Pancreas (tissue), 10 donors: ENCODE measurements at regions of chr10 and their contacts with region 1.

Region 1: DNA sequence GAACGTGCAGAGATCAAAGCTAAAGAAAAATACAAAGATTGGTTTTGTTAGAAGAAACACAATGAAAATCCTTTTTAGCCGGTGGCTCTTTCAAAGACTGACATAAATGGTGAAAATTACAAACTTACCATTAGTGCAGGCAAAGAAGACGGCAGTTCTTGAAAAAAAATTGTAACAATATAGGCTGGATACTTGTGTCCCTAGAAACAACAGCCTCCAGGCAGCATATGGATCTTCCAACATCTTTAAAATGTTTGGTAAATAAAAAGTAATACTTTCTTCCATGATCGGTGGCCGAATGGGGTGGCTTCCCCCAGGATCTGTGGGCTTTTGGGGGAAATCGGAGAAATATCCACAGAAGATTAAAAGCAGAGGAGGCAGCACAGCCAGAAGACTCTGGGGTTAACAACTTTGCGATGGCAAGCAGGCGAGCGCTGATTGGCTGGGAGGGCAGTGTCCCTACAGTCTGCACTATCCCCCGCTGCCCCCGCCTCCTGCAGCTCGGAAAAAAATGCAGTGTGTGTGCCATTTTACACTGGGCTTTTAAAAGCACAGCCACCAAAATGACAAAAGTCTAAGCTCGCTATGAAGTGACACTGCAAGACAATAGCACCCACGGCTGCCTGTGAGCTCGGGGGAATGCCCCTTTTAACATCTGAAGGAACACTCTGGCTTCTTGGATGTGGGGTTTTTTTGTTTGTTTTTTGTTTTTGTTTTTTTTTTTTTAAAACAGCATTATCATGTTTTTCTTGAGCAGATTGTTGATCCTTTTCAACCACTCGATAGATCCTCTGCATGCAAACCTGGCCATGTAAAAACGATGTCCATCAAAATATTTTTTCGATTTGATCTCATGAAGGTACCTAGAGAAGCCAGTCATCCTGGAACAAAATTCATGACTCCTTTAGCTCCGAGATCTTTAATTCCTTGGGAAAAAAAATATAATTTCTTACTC is 31.7 kb upstream of the EPC1 start:
- DNase-seq: peak; percentile 87 to 97 (median 91)
- ATAC-seq: peak; percentile 95 to 97 (median 96)
- H3K4me3 ChIP-seq: peak overlapping the region; percentile 26 to 62 (median 48)
- H3K27ac ChIP-seq: peak overlapping the region; percentile 43 to 95 (median 84)
- H3K4me1 ChIP-seq: peaks cover 0 to 16% (median 8%) of the 10 kb centered on the region in 3 donors
- H3K27me3 ChIP-seq: no peaks in the 10 kb centered on the region
- CTCF ChIP-seq: no peak

Region 2: DNA sequence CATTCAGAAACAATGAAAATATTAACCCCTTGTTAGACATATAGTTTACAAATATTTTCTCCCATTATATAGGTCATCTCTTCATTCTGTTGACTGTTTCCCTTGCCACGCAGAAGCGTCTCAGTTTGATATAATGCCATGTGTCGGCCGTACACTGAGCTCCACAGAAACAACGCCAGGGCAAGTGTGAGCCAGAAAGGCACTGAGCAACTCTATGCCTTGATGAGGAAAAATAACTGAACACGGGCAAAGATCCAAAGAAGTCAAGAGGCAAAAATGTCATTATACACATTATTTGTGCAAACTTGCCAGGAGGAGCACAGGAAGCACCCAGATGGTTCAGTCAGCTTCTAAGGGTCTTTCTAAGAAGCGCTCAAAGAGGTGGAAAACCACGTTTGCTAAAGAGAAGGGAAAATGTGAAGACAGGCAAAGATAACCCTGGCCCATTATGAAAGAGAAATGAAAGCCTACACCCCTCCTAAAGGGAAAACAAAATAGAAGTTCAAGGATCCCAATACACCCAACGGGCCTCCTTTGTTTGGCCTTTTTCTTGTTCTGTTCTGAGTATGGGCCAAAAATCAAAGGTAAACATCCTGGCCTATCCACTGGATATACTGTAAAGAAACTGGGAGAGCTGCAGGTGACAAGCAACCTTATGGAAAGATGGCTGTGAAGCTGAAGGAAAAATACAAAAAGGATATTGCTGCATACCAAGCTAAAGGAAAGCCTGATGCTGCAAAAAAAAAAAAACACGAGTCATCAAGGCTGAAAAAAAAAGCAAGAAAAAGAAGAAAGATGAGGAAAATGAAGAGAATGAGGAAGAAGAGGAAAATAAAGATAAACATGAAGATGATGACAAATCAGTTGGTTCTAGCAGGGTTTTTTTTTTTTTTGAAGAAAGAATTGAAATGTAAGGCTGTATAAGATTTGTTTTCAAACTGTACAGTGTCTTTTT is 465.5 kb before region 1 on chr10:
- intact Hi-C with region 1: no loop called
- DNase-seq: no peak
- ATAC-seq: peak in 3 of 4 donors; percentile 53 to 66 (median 59)
- H3K4me3 ChIP-seq: no peak overlapping the region
- H3K27ac ChIP-seq: peak overlapping the region in 1 of 4 donors; percentile 39
- H3K4me1 ChIP-seq: peaks cover 0 to 29% (median 18%) of the 10 kb centered on the region in 3 donors
- H3K27me3 ChIP-seq: no peaks in the 10 kb centered on the region
- CTCF ChIP-seq: no peak

Region 3: GRCh38 chr10:32445740-32446535 is 67.3 kb after region 1 on chr10 and contains the start of gene CCDC7:
- intact Hi-C with region 1: loop called in 1 of 3 experiments (anchors 5 kb)
- DNase-seq: peak; percentile 78 to 92 (median 86)
- ATAC-seq: peak; percentile 95 to 99 (median 98)
- H3K4me3 ChIP-seq: peak within 1 kb of the TSS; percentile 44 to 63 (median 50)
- H3K27ac ChIP-seq: peak within 1 kb of the TSS; percentile 83 to 98 (median 92)
- H3K4me1 ChIP-seq: peaks cover 0 to 13% (median 0%) of the 10 kb centered on the region in 3 donors
- H3K27me3 ChIP-seq: no peaks in the 10 kb centered on the region
- CTCF ChIP-seq: peak in 2 of 4 donors; percentile 26 to 38
- total RNA-seq, gene CCDC7: 5.2 to 15.8 (median 9.4) TPM

Region 4: GRCh38 chr10:33524966-33525365 is 1146.3 kb after region 1 on chr10:
- intact Hi-C with region 1: no loop called
- DNase-seq: no peak
- ATAC-seq: no peak
- H3K4me3 ChIP-seq: no peak overlapping the region
- H3K27ac ChIP-seq: no peak overlapping the region
- H3K4me1 ChIP-seq: no peaks in the 10 kb centered on the region
- H3K27me3 ChIP-seq: no peaks in the 10 kb centered on the region
- CTCF ChIP-seq: no peak